ENCODE measurements at regions of chr7 and their contacts with region 1.

Region 1: GRCh38 chr7:138712652-138713051 is 11.5 kb upstream of the SVOPL start:
- DNase-seq: no peak
- H3K4me3 Mint-ChIP-seq: no peak overlapping the region
- H3K27ac Mint-ChIP-seq: no peak overlapping the region
- H3K4me1 Mint-ChIP-seq: peaks cover 7% of the 10 kb centered on the region
- H3K27me3 Mint-ChIP-seq: peaks cover 2% of the 10 kb centered on the region

Region 2: DNA sequence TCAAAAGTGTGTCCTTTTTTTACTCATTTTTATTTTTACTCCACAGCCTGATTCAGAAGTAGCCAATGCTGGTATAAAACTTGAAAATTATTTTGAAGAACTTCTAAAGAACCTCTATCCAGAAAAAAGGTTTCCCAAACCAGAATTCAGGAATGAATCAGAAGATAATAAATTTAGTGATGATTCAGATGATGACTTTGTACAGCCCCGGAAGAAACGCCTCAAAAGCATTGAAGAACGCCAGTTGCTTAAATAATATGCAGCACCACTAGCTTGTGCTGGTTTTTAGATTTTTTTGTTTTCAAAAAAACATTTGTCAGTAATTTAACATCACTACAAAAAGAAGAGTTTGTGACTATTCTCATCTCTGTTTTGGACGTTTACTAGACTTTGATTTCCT is 128.0 kb before region 1 on chr7:
- CTCF ChIA-PET with region 1: no interaction called
- POLR2A ChIA-PET with region 1: no interaction called
- intact Hi-C with region 1: no loop called
- DNase-seq: no peak
- H3K4me3 Mint-ChIP-seq: no peak overlapping the region
- H3K27ac Mint-ChIP-seq: no peak overlapping the region
- H3K4me1 Mint-ChIP-seq: no peaks in the 10 kb centered on the region
- H3K27me3 Mint-ChIP-seq: no peaks in the 10 kb centered on the region

Region 3: DNA sequence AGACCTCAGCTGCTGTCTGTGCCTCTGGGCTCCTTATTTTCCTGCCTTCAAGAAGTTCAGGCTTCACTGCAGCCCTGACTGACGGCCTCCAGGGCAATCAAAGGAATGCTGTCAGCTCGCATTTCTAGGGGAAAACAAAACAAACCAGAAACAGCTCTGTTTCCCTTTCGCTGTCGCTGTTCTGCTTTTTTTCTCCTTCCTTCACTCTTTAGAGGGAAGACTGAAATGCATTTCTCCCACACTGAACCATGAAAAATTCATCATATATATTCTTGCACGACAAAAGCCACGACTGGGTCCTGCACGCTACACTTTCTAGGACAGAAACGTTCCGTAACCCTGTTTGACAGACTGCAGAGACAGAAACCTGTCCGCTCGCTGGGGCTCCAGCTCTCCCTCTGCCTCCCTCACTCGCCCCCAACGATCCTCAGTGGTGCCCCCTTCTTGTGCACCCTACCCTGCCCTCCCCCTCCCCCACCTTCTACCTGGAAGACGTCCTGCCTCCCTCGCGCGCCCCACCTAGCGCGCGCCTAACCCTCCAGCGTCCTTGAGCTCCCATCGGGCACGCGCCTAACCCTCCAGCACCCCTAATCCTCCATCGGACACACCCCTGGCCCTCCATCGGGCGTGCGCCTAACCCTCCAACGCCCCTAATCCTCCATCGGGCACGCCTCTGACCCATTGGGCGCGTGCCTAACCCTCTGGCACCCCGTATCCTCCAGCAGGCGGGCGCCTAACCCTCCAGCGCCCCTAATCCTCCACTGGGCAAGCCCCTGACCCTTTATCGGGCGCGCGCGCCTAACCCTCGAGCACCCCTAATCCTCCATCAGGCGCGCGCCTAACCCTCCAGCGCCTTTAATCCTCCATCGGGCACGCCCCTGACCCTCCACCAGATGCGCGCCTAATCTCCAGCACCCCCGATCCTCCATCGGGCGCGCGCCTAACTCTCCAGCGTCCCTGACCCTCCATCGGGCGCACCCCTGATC is 48.6 kb before region 1 on chr7:
- CTCF ChIA-PET with region 1: no interaction called
- POLR2A ChIA-PET with region 1: no interaction called
- intact Hi-C with region 1: loop called (anchors 10 kb)
- DNase-seq: peak; percentile 11
- H3K4me3 Mint-ChIP-seq: peak overlapping the region; percentile 47
- H3K27ac Mint-ChIP-seq: no peak overlapping the region
- H3K4me1 Mint-ChIP-seq: peaks cover 13% of the 10 kb centered on the region
- H3K27me3 Mint-ChIP-seq: peaks cover 52% of the 10 kb centered on the region

Measured in activated CD4-positive, alpha-beta memory T cell treated with anti-CD3 and anti-CD28 coated beads for 36 hours (primary cell).